ENCODE measurements at regions of chrX and their contacts with region 1.

Region 1: GRCh38 chrX:43958529-43958928 is 14.7 kb downstream of the NDP start:
- DNase-seq: peak in 1 of 3 donors; percentile 36
- ATAC-seq: peak; percentile 94
- H3K4me3 ChIP-seq: no peak overlapping the region
- H3K4me1 ChIP-seq: no peaks in the 10 kb centered on the region
- CTCF ChIP-seq: no peak

Region 2: DNA sequence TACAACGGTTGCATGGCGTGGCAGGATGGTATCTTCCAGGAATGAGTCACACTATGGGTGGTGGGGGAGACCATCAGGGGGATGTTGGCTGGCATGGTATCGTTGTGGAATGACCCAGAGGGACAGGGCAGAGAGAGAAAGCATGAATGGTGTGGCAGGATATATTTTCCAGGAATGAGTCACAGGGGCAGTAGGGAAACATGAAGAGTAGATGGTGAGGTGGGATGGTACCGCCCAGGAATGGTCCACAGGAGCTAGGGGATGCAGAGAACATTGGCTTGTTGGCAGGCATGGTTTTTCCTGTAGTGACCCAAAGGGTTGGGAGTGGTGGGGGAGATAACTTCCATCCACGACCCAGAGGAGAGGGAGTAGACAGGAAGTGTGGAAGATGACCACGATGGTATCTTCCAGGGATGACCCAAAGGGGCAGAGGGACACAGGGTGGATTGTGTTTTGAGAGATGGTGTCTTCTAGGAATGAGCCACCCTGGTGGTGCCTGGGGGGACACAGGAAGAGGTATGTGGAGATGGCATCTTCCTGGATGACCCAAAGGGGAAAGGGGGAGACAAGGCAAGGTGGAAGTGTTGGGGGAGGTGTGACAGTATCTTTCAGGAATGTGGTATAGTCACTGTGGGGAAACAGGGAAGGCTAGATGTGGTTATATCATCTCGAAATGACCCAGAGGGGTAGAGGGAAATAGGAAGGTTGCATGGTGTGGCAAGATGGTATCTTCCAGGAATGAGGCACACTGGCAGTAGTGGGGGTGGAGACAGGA is 239.8 kb before region 1 on chrX:
- intact Hi-C with region 1: no loop called
- DNase-seq: no peak
- ATAC-seq: no peak
- H3K4me3 ChIP-seq: no peak overlapping the region
- H3K4me1 ChIP-seq: no peaks in the 10 kb centered on the region
- CTCF ChIP-seq: no peak

Region 3: DNA sequence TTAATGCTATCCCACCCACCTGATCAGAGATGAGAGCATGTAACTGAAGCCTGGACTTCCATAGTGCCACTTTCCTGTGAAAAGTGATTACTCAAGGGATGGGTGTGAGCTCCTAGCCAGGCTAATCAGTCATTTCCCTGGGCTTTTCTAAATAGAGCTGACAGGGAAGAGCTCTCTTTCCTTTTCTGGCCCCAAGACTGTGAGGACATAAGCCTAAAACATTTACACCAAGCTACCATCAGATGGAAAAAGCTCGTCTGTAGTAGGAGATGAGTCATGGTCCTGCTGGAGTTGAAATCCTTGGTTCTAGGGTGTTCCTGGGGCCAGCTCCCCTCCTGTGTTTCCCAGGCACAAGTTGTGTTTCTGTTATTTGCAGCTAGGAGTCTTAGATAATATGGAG is 67.0 kb after region 1 on chrX:
- intact Hi-C with region 1: no loop called
- DNase-seq: no peak
- ATAC-seq: no peak
- H3K4me3 ChIP-seq: no peak overlapping the region
- H3K4me1 ChIP-seq: no peaks in the 10 kb centered on the region
- CTCF ChIP-seq: no peak

Region 4: GRCh38 chrX:44105228-44105914 is 146.8 kb after region 1 on chrX:
- intact Hi-C with region 1: no loop called
- DNase-seq: no peak
- ATAC-seq: no peak
- H3K4me3 ChIP-seq: no peak overlapping the region
- H3K4me1 ChIP-seq: no peaks in the 10 kb centered on the region
- CTCF ChIP-seq: no peak

Region 5: DNA sequence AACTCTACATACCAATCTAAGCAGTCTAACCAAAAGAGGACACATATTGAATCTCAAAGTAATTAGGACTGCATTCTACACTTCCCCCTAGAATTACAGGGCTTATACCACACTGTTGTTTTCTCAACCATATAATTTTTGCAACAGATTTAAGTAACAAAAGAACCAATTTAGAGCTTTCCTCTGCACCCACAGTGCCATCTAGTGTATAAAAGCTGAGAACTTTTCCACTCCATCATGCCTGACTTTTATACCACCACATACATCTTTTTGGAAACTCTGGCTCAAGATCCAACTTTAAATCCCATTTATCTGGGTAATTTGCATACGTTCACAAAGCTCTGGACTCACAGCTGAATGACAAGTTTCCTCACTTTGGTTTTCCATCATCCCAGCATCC is 285.5 kb after region 1 on chrX:
- intact Hi-C with region 1: loop called (anchors 10 kb)
- DNase-seq: peak in 1 of 3 donors; percentile 25
- ATAC-seq: peak; percentile 60
- H3K4me3 ChIP-seq: no peak overlapping the region
- H3K4me1 ChIP-seq: no peaks in the 10 kb centered on the region
- CTCF ChIP-seq: no peak

Measured in mucosa of descending colon (tissue), 3 donors.